AG04450 (cell line): ENCODE measurements at regions of chr10 and their contacts with region 1.

Region 1: GRCh38 chr10:18450298-18450697 is 201.1 kb downstream of the NSUN6 start:
- DNase-seq: no peak
- H3K4me3 ChIP-seq: no peak overlapping the region
- H3K27ac ChIP-seq: no peak overlapping the region
- H3K27me3 ChIP-seq: no peaks in the 10 kb centered on the region
- CTCF ChIP-seq: no peak

Region 2: DNA sequence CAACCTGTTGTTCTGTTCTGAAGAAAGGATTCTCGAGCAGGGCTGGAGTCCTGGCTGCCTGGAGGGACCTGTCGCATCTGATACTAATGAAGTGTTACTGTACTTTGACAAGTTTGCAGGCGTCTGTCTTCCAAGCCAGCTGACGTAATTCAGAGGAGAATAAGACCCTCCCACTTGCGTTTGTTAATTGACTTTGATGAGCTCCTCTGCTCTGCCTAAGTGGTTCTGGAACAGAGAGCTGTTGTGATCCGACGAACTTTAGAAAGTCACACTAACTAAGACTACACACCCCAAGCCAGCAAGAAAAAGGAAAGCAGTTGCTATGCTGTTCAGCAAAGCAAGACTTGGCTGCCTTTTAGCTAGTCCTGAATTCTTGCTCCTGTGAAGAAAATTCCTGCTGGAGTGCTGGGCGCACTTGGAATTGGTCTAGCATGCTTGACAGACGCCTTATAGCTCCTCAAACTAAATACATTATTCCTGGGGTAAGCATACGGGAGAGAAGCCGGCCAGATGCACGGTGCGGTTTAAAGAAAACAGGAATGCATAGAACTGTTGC is 109.7 kb before region 1 on chr10:
- CTCF ChIA-PET with region 1: interaction called, 11 read pairs
- POLR2A ChIA-PET with region 1: no interaction called
- DNase-seq: peak; percentile 23
- H3K4me3 ChIP-seq: peak overlapping the region; percentile 48
- H3K27ac ChIP-seq: peak overlapping the region; percentile 3
- H3K27me3 ChIP-seq: no peaks in the 10 kb centered on the region
- CTCF ChIP-seq: no peak

Region 3: DNA sequence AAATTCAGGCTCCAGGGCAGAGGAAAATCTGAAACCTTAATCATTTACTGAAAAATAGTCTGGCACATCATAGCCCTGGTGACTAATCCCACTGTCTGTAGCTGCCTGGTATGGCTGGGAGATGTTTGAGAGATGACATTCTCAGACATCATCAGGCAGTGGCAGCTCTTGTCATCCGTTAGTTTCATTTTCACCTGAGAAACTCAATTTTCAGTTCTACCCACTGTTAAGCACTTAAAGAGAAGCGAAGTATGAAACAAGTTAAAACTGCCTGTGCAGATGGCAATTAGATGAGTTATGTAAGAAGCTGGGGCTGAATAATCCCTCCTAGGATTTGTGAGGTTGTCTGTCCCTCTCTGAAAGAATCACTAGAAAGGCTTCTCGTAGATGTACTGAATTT is 50.9 kb after region 1 on chr10:
- CTCF ChIA-PET with region 1: no interaction called
- POLR2A ChIA-PET with region 1: no interaction called
- DNase-seq: no peak
- H3K4me3 ChIP-seq: no peak overlapping the region
- H3K27ac ChIP-seq: no peak overlapping the region
- H3K27me3 ChIP-seq: no peaks in the 10 kb centered on the region
- CTCF ChIP-seq: no peak

Region 4: DNA sequence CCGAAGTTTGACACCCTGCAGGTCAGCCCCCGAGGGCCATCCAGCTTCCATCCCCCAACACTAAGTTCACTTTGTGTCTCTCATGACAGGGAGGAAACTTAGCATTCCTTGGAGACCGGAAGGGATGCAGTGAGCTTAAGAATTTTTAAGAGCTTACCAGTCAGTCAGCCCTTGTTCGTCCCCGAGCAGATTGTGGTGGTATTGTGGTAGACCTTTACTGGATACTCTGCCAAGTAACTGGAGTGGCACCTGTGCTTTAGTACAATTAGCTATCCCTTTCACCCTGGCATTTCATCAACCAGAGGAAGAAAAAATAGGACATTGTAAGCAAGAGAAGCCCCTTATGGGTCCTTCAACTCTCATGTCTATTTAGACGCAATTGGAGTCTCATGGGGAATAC is 126.3 kb after region 1 on chr10:
- CTCF ChIA-PET with region 1: no interaction called
- POLR2A ChIA-PET with region 1: no interaction called
- DNase-seq: no peak
- H3K4me3 ChIP-seq: no peak overlapping the region
- H3K27ac ChIP-seq: no peak overlapping the region
- H3K27me3 ChIP-seq: no peaks in the 10 kb centered on the region
- CTCF ChIP-seq: no peak